Left cardiac atrium (tissue), 4 donors: ENCODE measurements at regions of chr14 and their contacts with region 1.

Region 1: GRCh38 chr14:93892923-93893558 is 34.1 kb upstream of the FAM181A start:
- DNase-seq: peak; percentile 79
- ATAC-seq: peak; percentile 69 to 70

Region 2: DNA sequence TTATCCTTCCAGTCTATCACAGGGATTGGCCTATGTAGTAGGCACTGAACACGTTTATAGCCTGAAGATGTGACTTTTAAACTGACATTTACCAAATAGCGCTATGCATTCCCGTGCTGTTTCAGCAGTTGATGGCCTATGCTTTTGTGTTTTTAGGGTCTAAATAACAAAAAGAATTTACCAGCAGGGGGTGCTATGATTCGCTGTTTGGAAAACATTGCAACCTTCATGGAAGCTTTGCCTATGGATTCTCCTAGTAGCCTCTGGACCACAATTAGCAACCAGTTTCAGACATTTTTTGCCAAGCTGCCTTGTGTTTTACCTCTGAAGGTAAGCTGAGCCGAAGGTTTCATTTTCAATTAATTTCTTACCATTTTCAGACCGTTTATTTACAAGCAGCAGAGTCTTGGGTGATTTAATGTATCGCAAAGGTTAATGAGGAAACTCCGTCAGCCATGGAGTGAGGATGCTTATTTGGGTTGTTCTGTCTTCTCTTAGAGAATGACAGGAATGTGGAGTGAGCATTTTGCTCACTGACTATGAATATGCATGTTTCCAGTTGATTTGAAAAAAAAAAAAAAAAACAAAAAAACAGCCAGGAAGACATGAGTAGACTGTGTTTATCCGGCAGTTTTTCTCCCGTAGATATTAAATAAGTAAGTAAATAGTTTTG is 237.8 kb before region 1 on chr14:
- intact Hi-C with region 1: loop called (anchors 2 to 10 kb)
- DNase-seq: no peak
- ATAC-seq: peak in 1 of 2 donors; percentile 50

Region 3: DNA sequence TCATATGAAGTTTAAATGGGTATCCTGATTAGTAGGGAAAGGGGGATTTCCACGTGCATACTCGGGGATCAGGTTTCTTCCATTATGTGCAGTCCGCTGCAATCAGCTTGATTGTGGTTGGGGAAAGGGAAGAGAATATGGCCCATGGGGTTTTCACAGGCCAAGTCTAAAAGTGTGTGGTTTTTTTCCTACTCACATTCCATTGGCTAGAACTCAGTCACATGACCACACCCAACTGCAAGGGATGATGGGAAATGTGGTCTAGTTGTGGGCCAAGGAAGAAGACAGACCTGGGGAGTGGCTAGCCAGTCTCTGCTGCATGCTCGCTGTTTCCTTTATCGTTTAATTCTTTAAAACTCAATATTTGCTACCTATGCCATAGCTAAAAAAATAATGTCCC is 209.8 kb before region 1 on chr14:
- intact Hi-C with region 1: no loop called
- DNase-seq: no peak
- ATAC-seq: no peak